Endothelial cell of umbilical vein (primary cell): ENCODE measurements at regions of chr13 and their contacts with region 1.

Region 1: DNA sequence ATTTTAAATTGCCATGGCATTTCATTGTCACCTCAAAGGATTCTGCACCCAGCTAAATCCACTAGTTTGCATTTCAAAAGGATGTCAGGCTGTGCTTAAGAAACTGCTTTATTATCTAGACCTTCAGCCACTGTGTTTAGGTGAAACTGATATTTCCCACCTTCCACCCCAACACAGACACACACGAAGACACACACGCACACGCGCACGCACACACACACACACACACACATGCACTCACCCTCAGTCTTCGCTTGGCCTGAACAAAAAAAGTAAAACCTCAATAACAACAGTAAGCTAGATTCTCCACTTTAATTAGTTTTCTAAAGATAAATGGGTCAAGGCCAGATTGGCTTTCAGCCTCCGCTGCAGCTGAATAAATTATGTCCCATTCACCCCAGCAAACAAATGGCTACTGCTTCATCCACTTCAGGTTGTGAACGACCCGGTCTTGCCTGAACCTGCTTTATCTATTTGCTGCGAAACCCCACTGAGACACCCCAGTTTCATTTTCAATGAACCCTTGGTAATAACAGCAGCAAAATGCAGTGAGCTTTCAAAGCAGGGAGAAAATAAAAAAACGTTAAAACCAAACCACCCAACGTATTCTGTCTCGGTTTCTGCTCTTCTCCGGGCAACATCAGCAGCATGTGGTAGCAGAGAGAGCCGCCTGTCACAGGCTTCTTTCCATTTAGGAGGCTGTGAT is 166.8 kb downstream of the DCT start:
- DNase-seq: no peak
- H3K4me3 ChIP-seq: no peak overlapping the region
- H3K27ac ChIP-seq: peak overlapping the region; percentile 88
- H3K4me1 ChIP-seq: peaks cover 39% of the 10 kb centered on the region
- H3K27me3 ChIP-seq: no peaks in the 10 kb centered on the region
- CTCF ChIP-seq: no peak
- POLR2A ChIP-seq: no peak

Region 2: DNA sequence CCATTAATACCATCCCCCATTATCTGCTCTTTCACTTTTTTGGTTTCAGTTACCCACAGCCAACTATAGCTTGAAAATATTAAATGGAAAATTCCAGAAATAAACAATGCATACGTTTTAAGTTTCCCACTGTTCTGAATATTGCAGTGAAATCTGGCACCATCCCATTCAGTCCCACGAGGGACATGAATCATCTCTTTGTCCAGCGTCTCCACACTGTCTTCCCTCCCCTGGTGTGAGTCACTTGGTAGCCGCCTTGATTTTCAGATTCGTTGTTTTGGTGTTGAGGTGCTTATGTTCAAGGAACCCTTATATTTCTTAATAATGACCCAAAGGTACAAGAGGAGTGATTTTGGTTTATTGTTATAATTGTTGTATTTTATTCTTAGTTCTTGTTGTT is 79.3 kb before region 1 on chr13:
- CTCF ChIA-PET with region 1: no interaction called
- POLR2A ChIA-PET with region 1: no interaction called
- dilution Hi-C with region 1: no loop called
- intact Hi-C with region 1: loop called (anchors 5 kb)
- DNase-seq: peak; percentile 26
- H3K4me3 ChIP-seq: no peak overlapping the region
- H3K27ac ChIP-seq: no peak overlapping the region
- H3K4me1 ChIP-seq: no peaks in the 10 kb centered on the region
- H3K27me3 ChIP-seq: no peaks in the 10 kb centered on the region
- CTCF ChIP-seq: no peak
- POLR2A ChIP-seq: no peak

Region 3: DNA sequence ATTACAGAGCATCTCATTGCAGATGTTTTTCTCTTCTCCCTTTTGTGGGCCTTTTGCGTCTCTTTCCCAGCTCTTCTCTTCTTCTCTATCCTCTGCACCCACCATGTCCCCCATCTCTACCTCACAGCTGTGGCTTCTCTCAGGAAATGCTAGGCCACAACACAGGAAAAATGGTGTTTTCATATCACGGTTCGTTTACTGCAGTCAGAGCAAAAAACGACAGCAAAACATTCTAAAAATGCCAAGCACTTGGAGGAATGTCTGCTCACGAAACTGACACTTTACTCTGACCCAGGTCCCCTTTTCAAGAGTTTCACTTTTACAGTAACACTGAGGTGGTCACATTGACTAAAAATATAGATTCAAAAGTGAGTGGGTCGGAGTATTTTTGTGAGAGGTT is 14.7 kb after region 1 on chr13:
- CTCF ChIA-PET with region 1: interaction called, 6 read pairs
- POLR2A ChIA-PET with region 1: no interaction called
- dilution Hi-C with region 1: no loop called
- intact Hi-C with region 1: loop called (anchors 2 kb)
- DNase-seq: peak; percentile 12
- H3K4me3 ChIP-seq: no peak overlapping the region
- H3K27ac ChIP-seq: no peak overlapping the region
- H3K4me1 ChIP-seq: peaks cover 2% of the 10 kb centered on the region
- H3K27me3 ChIP-seq: no peaks in the 10 kb centered on the region
- CTCF ChIP-seq: no peak
- POLR2A ChIP-seq: no peak

Region 4: GRCh38 chr13:94739235-94739634 is 426.6 kb after region 1 on chr13:
- CTCF ChIA-PET with region 1: no interaction called
- POLR2A ChIA-PET with region 1: no interaction called
- dilution Hi-C with region 1: no loop called
- intact Hi-C with region 1: no loop called
- DNase-seq: no peak
- H3K4me3 ChIP-seq: no peak overlapping the region
- H3K27ac ChIP-seq: no peak overlapping the region
- H3K4me1 ChIP-seq: no peaks in the 10 kb centered on the region
- H3K27me3 ChIP-seq: peaks cover 1 to 3% of the 10 kb centered on the region in 2 experiments
- CTCF ChIP-seq: no peak
- POLR2A ChIP-seq: no peak